Left colon (tissue), 2 donors: ENCODE measurements at regions of chr12 and their contacts with region 1.

Region 1: GRCh38 chr12:26853303-26854030 is 20.5 kb upstream of the ITPR2 start:
- DNase-seq: peak; percentile 44 to 75
- ATAC-seq: peak; percentile 89

Region 2: DNA sequence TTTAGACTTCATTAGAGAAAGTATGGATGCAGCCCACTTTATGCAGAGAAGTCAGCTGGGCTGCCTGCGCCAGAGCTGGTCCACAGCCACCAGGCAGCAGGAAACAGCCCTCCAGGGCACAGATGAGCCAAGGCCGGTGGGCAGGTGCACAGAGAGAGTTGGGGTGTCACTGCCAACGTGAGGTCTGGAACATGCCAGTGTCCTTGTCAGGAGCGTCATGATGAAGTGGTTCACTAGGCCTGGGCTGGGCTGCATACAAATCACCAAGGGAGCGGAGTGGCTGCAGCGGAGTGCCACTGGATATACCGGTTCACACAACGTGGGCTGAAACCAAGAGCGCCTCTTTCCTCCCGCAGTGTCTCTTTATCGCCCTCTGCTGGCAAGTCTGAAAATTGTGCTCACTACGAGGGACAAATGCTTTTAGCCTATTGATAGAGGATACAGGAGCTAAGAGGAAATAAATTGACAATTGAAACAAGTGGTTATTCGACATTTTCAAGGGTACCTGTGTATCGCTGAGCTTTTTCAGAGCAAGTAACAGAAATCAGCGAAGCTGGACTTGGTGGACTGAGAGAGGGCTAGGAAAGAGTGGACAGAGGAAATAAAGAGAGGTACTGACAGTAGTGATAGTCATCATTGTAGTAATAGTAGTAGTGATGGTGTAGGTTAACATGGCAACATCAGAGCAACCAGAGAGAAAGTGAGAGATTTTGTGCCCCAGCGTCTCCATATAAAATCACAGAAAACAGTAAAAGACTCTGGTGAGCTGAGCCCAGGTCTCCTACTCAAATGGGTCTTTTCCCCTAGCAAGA is 31.5 kb after region 1 on chr12:
- intact Hi-C with region 1: loop called in 1 of 2 experiments (anchors 2 kb)
- DNase-seq: peak; percentile 76 to 86
- ATAC-seq: peak; percentile 98